ENCODE measurements at regions of chr3 and their contacts with region 1.

Region 1: GRCh38 chr3:81743096-81744025 is 18.1 kb downstream of the GBE1 start:
- DNase-seq: no peak
- ATAC-seq: no peak
- H3K4me3 ChIP-seq: no peak overlapping the region
- H3K27ac ChIP-seq: no peak overlapping the region
- H3K4me1 ChIP-seq: 0 out of 2 replicates have a peak, but pooled peaks cover 2% of the 10 kb centered on the region
- H3K27me3 ChIP-seq: no peaks in the 10 kb centered on the region
- CTCF ChIP-seq: no peak
- EP300 ChIP-seq: no peak
- POLR2A ChIP-seq: no peak
- RAD21 ChIP-seq: no peak

Region 2: DNA sequence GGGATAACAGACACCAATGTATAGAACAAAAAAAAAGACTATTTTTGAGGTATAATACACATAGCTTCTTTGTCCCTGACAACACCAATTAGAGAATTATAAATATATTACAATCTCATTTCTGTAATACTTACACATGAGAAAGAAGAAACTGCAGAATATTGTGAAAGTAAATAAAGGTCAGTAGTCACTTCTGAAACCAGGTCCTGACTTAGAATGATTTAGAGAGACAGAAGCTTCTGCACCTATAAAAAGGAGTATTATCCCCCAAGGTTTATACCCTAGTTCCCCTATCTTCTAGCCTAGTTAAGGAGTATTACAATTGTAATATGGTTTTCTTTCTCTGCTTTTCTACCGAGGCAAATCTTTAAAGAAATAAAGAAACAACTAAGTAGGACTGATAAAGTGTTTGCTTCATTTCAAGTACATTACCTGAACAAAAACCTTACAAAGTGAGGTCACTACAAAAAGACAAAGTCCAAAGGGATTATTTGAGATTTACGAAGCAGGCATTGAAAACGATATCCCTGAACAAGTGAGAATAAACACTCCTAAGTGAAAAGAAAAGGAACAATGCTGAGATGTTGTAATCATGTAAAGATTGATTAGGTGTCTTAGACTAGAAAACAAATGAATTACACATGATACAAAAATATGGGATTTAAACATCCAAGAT is 84.9 kb before region 1 on chr3:
- CTCF ChIA-PET with region 1: no interaction called
- POLR2A ChIA-PET with region 1: no interaction called
- RAD21 ChIA-PET with region 1: no interaction called
- SMC1A ChIA-PET with region 1: no interaction called
- in situ Hi-C with region 1: no loop called
- intact Hi-C with region 1: no loop called
- DNase-seq: no peak
- ATAC-seq: peak; percentile 23; the same call in 2 of the 3 replicates
- H3K4me3 ChIP-seq: no peak overlapping the region
- H3K27ac ChIP-seq: no peak overlapping the region
- H3K4me1 ChIP-seq: no peaks in the 10 kb centered on the region
- H3K27me3 ChIP-seq: no peaks in the 10 kb centered on the region
- CTCF ChIP-seq: no peak
- EP300 ChIP-seq: no peak
- POLR2A ChIP-seq: no peak
- RAD21 ChIP-seq: no peak

Region 3: DNA sequence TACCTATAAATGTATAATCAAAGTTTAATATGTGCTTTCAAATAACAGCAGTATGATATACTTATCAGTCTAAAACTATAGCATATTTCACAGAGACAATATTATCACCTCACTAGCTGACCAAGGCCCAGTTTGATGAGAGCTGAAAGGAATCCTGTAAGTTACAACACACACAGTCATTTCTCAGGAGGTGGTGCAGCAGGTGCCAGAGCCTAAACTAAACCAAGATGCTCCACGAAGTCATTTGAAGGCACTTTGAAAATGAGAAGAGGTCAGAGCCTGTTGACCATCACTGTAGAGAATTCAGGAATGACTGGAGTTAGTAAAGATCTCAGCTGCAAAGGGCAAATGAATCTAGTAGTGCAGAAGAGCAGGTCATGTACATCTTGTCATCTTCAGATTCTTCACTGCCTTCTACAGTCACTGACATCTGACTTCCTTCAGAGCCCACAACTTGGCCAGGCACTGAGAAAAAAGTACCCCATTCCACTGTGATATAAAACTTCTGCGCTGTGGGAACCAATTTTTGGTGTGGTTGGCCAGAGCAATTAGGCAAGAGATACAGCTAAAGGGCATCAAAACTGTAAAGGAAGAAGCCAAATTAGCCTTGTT is 10.2 kb after region 1 on chr3:
- CTCF ChIA-PET with region 1: interaction called, 10 read pairs
- POLR2A ChIA-PET with region 1: no interaction called
- RAD21 ChIA-PET with region 1: interaction called, 6 read pairs
- SMC1A ChIA-PET with region 1: interaction called, 18 read pairs
- in situ Hi-C with region 1: no loop called
- intact Hi-C with region 1: no loop called
- DNase-seq: no peak
- ATAC-seq: peak; percentile 60
- H3K4me3 ChIP-seq: no peak overlapping the region
- H3K27ac ChIP-seq: no peak overlapping the region
- H3K4me1 ChIP-seq: no peaks in the 10 kb centered on the region
- H3K27me3 ChIP-seq: no peaks in the 10 kb centered on the region
- CTCF ChIP-seq: no peak
- EP300 ChIP-seq: no peak
- POLR2A ChIP-seq: no peak
- RAD21 ChIP-seq: no peak

Measured in GM12878 (cell line).